ENCODE measurements at regions of chr5 and their contacts with region 1.

Region 1: DNA sequence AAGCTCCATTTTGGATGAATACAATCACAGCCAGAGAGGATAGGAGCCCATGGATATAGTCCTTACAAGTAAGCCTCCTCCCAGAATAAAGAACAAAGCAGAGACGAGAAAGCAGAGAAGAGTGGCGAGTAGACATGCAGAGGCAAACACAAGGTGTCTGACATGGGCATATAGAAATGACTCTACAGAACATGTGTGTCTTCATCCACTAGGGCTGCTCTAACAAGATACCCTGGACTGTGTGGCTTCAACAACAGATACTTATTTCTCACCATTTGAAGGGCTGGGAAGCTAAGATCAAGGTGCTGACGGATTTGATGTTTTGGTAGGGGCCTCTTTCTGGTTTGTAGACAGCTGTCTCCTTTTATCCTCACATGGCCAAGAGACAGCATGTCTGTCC is 32.3 kb upstream of the FER start:
- DNase-seq: no peak
- ATAC-seq: no peak
- H3K4me3 ChIP-seq: no peak overlapping the region
- H3K4me3 Mint-ChIP-seq: no peak overlapping the region
- H3K27ac ChIP-seq: no peak overlapping the region
- H3K27ac Mint-ChIP-seq: no peak overlapping the region
- H3K4me1 ChIP-seq: no peaks in the 10 kb centered on the region
- H3K4me1 Mint-ChIP-seq: no peaks in the 10 kb centered on the region
- H3K27me3 ChIP-seq: peaks cover 0 to 4% of the 10 kb centered on the region in 2 experiments
- H3K27me3 Mint-ChIP-seq: peaks cover 4% of the 10 kb centered on the region
- CTCF ChIP-seq: no peak

Region 2: GRCh38 chr5:108700930-108701329 is 14.5 kb before region 1 on chr5:
- CTCF ChIA-PET with region 1: no interaction called
- POLR2A ChIA-PET with region 1: no interaction called
- intact Hi-C with region 1: no loop called
- DNase-seq: no peak
- ATAC-seq: no peak
- H3K4me3 ChIP-seq: no peak overlapping the region
- H3K4me3 Mint-ChIP-seq: no peak overlapping the region
- H3K27ac ChIP-seq: no peak overlapping the region
- H3K27ac Mint-ChIP-seq: no peak overlapping the region
- H3K4me1 ChIP-seq: no peaks in the 10 kb centered on the region
- H3K4me1 Mint-ChIP-seq: no peaks in the 10 kb centered on the region
- H3K27me3 ChIP-seq: no peaks in the 10 kb centered on the region
- H3K27me3 Mint-ChIP-seq: peaks cover 11% of the 10 kb centered on the region
- CTCF ChIP-seq: no peak

Region 3: DNA sequence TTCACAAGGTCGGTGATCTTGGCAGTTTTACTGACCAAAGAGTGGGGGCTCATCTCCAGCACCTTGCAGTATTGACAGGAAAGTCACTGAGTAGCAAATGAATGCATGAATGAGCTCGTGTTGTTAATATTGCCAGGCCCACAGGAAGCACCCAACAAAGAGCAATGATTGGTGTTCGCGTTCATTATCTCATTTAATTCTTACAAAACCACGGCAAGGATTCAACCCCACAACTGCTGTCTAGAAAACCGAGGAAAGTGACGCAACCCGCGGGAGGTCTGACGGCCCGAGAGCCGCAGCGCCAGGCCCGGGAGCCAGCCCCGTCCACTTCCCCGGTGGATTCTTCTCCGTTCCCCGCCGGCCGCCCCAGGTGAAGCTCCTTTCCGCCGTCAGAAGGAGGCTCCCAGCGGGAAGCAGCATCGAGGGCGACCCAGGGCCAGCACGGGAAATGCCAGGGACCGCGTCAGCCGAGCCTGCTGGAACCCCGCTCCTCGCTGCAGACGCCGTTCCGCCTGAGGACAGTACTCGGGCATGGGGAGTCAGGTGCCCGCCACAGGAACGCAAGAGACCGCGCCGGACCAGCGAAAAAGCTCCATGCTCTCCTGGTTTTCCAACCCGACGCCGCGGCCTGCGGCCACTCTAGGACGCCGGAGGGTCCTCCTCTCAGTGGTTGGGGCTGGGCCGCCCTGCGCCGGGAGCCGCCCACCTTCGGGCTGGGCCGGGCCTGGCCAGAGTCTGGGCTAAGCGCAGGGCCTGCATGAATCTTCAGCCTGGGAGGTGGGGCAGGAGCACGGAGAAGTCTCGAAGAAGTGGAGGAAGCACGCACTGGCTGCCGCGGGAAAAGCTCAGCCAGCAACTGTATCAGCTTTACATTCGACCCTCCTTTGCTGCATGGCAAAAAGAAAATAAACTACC is 12.5 kb after region 1 on chr5:
- CTCF ChIA-PET with region 1: no interaction called
- POLR2A ChIA-PET with region 1: no interaction called
- intact Hi-C with region 1: no loop called
- DNase-seq: peak in 8 of 9 experiments; percentile 21 to 70 (median 46)
- ATAC-seq: peak; percentile 70
- H3K4me3 ChIP-seq: peak overlapping the region; percentile 85 to 87
- H3K4me3 Mint-ChIP-seq: peak overlapping the region; percentile 90
- H3K27ac ChIP-seq: peak overlapping the region; percentile 52 to 60
- H3K27ac Mint-ChIP-seq: peak overlapping the region; percentile 56
- H3K4me1 ChIP-seq: peaks cover 6% of the 10 kb centered on the region
- H3K4me1 Mint-ChIP-seq: peaks cover 24% of the 10 kb centered on the region
- H3K27me3 ChIP-seq: peaks cover 0 to 3% of the 10 kb centered on the region in 2 experiments
- H3K27me3 Mint-ChIP-seq: peaks cover 21% of the 10 kb centered on the region
- CTCF ChIP-seq: no peak

Region 4: GRCh38 chr5:108788142-108788541 is 72.7 kb after region 1 on chr5:
- CTCF ChIA-PET with region 1: no interaction called
- POLR2A ChIA-PET with region 1: no interaction called
- intact Hi-C with region 1: loop called in 1 of 2 experiments (anchors 5 kb)
- DNase-seq: no peak
- ATAC-seq: no peak
- H3K4me3 ChIP-seq: no peak overlapping the region
- H3K4me3 Mint-ChIP-seq: no peak overlapping the region
- H3K27ac ChIP-seq: no peak overlapping the region
- H3K27ac Mint-ChIP-seq: no peak overlapping the region
- H3K4me1 ChIP-seq: no peaks in the 10 kb centered on the region
- H3K4me1 Mint-ChIP-seq: peaks cover 2% of the 10 kb centered on the region
- H3K27me3 ChIP-seq: no peaks in the 10 kb centered on the region
- H3K27me3 Mint-ChIP-seq: no peaks in the 10 kb centered on the region
- CTCF ChIP-seq: no peak

Region 5: GRCh38 chr5:109242518-109242917 is 527.1 kb after region 1 on chr5:
- CTCF ChIA-PET with region 1: no interaction called
- POLR2A ChIA-PET with region 1: no interaction called
- intact Hi-C with region 1: no loop called
- DNase-seq: no peak
- ATAC-seq: no peak
- H3K4me3 ChIP-seq: no peak overlapping the region
- H3K4me3 Mint-ChIP-seq: no peak overlapping the region
- H3K27ac ChIP-seq: no peak overlapping the region
- H3K27ac Mint-ChIP-seq: no peak overlapping the region
- H3K4me1 ChIP-seq: no peaks in the 10 kb centered on the region
- H3K4me1 Mint-ChIP-seq: peaks cover 1% of the 10 kb centered on the region
- H3K27me3 ChIP-seq: no peaks in the 10 kb centered on the region
- H3K27me3 Mint-ChIP-seq: no peaks in the 10 kb centered on the region
- CTCF ChIP-seq: no peak

Measured in CD8-positive, alpha-beta T cell (primary cell).